ENCODE measurements at regions of chr2 and their contacts with region 1.

Region 1: DNA sequence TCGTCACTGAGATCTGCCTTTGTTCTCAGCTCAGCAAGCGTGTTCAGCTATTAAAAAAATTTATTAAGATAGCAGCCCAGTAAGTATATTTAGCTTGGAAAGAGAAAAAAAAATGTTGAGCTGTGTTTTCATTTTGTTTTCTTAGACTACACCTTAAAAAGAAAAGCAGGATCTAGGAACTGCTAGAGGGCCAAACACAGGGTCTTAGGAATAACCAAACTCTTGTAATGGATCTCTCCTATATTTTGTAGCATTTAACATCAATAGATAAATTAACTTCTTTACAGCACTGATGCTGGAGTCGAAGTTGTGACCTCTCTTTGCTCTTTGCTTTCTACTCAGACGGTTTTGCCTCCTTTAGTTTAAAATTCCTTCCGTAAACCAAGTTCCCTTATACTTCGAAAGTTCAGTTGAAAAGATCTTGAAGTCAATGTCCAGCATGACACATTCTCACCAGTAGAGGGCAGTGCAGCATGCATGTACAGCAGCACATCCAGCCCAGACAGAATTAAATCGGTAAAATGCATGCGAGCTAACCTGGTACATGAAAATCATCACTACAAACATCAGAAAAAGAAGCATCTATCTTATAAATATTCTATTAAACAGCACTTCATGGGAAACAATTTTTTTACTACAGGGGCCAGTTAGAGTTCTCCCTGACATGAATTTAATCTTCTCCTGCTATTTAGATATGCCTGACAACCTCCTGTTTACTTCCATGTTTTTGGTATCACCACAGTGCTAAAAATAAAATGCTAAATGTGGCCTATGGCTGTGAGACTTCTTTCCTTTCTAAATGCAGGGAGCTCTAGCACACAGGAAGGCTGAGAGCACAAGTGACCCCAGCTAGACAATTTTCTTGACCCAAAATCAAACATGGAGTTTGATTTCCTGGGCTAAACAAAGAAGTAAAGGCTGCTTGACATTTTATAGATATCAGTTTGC is 48.2 kb upstream of the MAP3K20 start:
- DNase-seq: peak in 4 of 5 donors; percentile 79 to 89 (median 86)
- ATAC-seq: peak; percentile 77 to 88 (median 82)
- H3K4me3 ChIP-seq: peak overlapping the region in 1 of 12 donors; percentile 7
- H3K27ac ChIP-seq: peak overlapping the region; percentile 68 to 93 (median 86)
- H3K4me1 ChIP-seq: peaks cover 0 to 41% (median 25%) of the 10 kb centered on the region in 12 donors
- H3K27me3 ChIP-seq: no peaks in the 10 kb centered on the region
- CTCF ChIP-seq: peak; percentile 91 to 98 (median 96)
- POLR2A ChIP-seq: no peak

Region 2: GRCh38 chr2:171491292-171491691 is 1536.2 kb before region 1 on chr2:
- intact Hi-C with region 1: no loop called
- DNase-seq: no peak
- ATAC-seq: no peak
- H3K4me3 ChIP-seq: no peak overlapping the region
- H3K27ac ChIP-seq: no peak overlapping the region
- H3K4me1 ChIP-seq: no peaks in the 10 kb centered on the region
- H3K27me3 ChIP-seq: no peaks in the 10 kb centered on the region
- CTCF ChIP-seq: no peak
- POLR2A ChIP-seq: no peak

Region 3: GRCh38 chr2:172864182-172864581 is 163.3 kb before region 1 on chr2:
- intact Hi-C with region 1: loop called in 1 of 10 experiments (anchors 5 kb)
- DNase-seq: peak in 4 of 5 donors; percentile 35 to 60 (median 51)
- ATAC-seq: peak; percentile 40 to 75 (median 63)
- H3K4me3 ChIP-seq: no peak overlapping the region
- H3K27ac ChIP-seq: no peak overlapping the region
- H3K4me1 ChIP-seq: peaks cover 3 to 49% (median 34%) of the 10 kb centered on the region in 12 donors
- H3K27me3 ChIP-seq: no peaks in the 10 kb centered on the region
- CTCF ChIP-seq: peak; percentile 39 to 78 (median 64)
- POLR2A ChIP-seq: no peak

Region 4: DNA sequence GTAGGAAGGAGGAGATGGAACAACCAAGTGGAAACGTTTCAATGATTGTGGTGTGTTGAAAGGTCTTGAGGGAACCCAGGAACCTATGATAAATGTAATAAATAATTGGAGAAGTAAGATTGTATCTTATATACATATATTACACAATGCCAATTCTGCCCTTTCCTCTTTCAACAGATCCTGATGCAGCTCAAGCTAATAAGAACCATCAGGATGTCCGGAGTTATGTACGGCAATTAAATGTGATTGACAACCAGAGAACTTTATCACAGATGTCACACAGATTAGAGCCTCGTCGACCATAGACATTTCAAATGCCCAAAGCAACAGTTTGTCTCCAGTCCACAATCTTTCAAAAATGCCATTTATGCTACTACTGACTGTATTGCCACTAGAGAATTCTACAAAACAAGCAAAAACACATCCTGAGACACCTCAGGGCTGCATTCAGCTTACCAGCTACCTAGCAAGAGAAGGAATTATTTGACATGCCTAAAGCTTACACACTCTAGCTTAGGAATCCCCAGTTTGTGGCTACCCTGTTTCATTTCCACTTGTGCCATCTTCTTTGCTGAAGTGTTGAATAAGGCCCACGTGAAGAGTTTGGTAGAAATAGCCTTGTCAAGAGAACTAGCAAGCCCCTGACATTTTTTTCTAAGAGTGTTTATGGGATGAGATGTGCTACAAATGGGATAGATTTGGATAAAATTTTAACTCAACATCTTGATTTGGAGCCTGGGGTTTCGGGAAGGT is 24.2 kb after region 1 on chr2:
- intact Hi-C with region 1: loop called in 1 of 10 experiments (anchors 1 kb)
- DNase-seq: no peak
- ATAC-seq: no peak
- H3K4me3 ChIP-seq: no peak overlapping the region
- H3K27ac ChIP-seq: no peak overlapping the region
- H3K4me1 ChIP-seq: peaks cover 0 to 35% (median 13%) of the 10 kb centered on the region in 12 donors
- H3K27me3 ChIP-seq: no peaks in the 10 kb centered on the region
- CTCF ChIP-seq: no peak
- POLR2A ChIP-seq: no peak

Region 5: GRCh38 chr2:173218326-173219056 is 191.0 kb after region 1 on chr2:
- intact Hi-C with region 1: loop called in 1 of 10 experiments (anchors 2 kb)
- DNase-seq: peak in 2 of 5 donors; percentile 32 to 42
- ATAC-seq: peak; percentile 63 to 82 (median 70)
- H3K4me3 ChIP-seq: peak overlapping the region in 1 of 12 donors; percentile 7
- H3K27ac ChIP-seq: peak overlapping the region in 11 of 12 donors; percentile 9 to 79 (median 38)
- H3K4me1 ChIP-seq: peaks cover 0 to 37% (median 17%) of the 10 kb centered on the region in 12 donors
- H3K27me3 ChIP-seq: no peaks in the 10 kb centered on the region
- CTCF ChIP-seq: no peak
- POLR2A ChIP-seq: no peak